Activated CD4-positive, alpha-beta T cell treated with anti-CD3 and anti-CD28 coated beads, Interleukin-2, amount 10 ng/mL, durations not matched to agents 24 days and 14 days (primary cell): ENCODE measurements at regions of chr16 and their contacts with region 1.

Region 1: GRCh38 chr16:86508947-86509758 is 1.2 kb upstream of the FOXF1 start:
- DNase-seq: peak; percentile 82
- H3K4me3 Mint-ChIP-seq: peak overlapping the region; percentile 75
- H3K27ac Mint-ChIP-seq: peak overlapping the region; percentile 76
- H3K4me1 Mint-ChIP-seq: peaks cover 21% of the 10 kb centered on the region
- H3K27me3 Mint-ChIP-seq: peaks cover 64% of the 10 kb centered on the region

Region 2: GRCh38 chr16:86285938-86286921 is 222.9 kb before region 1 on chr16:
- intact Hi-C with region 1: loop called (anchors 5 kb)
- DNase-seq: no peak
- H3K4me3 Mint-ChIP-seq: no peak overlapping the region
- H3K27ac Mint-ChIP-seq: no peak overlapping the region
- H3K4me1 Mint-ChIP-seq: no peaks in the 10 kb centered on the region
- H3K27me3 Mint-ChIP-seq: peaks cover 60% of the 10 kb centered on the region

Region 3: GRCh38 chr16:86432691-86433090 is 76.5 kb before region 1 on chr16:
- intact Hi-C with region 1: no loop called
- DNase-seq: no peak
- H3K4me3 Mint-ChIP-seq: no peak overlapping the region
- H3K27ac Mint-ChIP-seq: no peak overlapping the region
- H3K4me1 Mint-ChIP-seq: no peaks in the 10 kb centered on the region
- H3K27me3 Mint-ChIP-seq: no peaks in the 10 kb centered on the region

Region 4: GRCh38 chr16:86491256-86492023 is 17.7 kb before region 1 on chr16:
- intact Hi-C with region 1: no loop called
- DNase-seq: no peak
- H3K4me3 Mint-ChIP-seq: no peak overlapping the region
- H3K27ac Mint-ChIP-seq: no peak overlapping the region
- H3K4me1 Mint-ChIP-seq: no peaks in the 10 kb centered on the region
- H3K27me3 Mint-ChIP-seq: peaks cover 56% of the 10 kb centered on the region